Psoas muscle (tissue), 8 donors: ENCODE measurements at regions of chrX and their contacts with region 1.

Region 1: DNA sequence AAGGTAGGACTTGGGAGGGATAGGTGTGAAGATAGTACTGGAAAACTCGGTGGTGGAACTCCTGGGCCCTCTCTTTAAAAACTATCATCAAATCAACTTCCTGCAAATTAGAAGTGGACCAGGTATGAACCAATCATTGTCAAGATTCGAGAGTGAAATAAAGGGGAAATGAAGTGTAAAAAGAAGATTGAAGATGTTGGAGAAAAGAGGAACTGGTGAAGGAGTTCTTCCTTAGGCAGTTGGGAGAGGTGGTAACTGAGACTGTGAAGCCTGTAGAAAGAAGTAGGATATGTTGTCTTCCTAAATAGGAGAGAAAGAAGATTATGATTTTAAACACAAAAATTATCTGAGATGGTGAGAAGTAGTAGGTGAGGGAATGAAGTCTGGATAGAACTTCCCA is 212.2 kb downstream of the PPP1R2C start:
- DNase-seq: no peak
- ATAC-seq: no peak
- H3K4me3 ChIP-seq: no peak overlapping the region
- H3K27ac ChIP-seq: no peak overlapping the region
- H3K4me1 ChIP-seq: no peaks in the 10 kb centered on the region
- H3K27me3 ChIP-seq: peaks cover 0 to 7% (median 0%) of the 10 kb centered on the region in 3 donors
- CTCF ChIP-seq: no peak

Region 2: GRCh38 chrX:42450232-42450631 is 115.5 kb before region 1 on chrX:
- intact Hi-C with region 1: no loop called
- DNase-seq: no peak
- ATAC-seq: no peak
- H3K4me3 ChIP-seq: no peak overlapping the region
- H3K27ac ChIP-seq: no peak overlapping the region
- H3K4me1 ChIP-seq: no peaks in the 10 kb centered on the region
- H3K27me3 ChIP-seq: no peaks in the 10 kb centered on the region
- CTCF ChIP-seq: no peak

Region 3: DNA sequence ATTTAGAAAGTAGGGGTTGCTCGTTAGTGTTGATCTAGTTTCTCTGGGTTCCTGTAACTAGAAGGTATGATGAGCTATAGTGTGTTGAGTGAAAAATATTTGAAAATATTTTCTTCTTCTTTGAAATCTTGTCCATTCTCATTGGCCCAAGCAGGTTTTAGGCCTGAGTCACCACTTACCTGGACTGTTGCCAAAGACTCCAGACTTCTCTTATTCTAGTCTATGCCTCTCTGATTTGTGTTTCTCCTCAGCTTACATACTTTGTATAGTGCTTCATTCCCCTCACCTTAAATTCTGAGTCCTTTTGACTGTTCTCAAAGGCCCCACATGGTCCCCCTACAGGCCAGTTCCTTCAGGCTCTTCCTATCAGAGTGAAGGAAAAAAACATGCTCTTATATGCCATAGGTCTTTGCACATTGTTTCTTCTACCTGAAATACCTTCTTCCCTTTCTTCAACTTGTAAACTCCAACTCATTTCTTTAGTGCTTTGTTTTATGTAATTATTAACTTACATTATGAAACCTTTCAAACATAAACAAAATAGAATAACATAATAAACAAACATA is 46.0 kb before region 1 on chrX:
- intact Hi-C with region 1: no loop called
- DNase-seq: no peak
- ATAC-seq: no peak
- H3K4me3 ChIP-seq: no peak overlapping the region
- H3K27ac ChIP-seq: no peak overlapping the region
- H3K4me1 ChIP-seq: no peaks in the 10 kb centered on the region
- H3K27me3 ChIP-seq: no peaks in the 10 kb centered on the region
- CTCF ChIP-seq: no peak

Region 4: GRCh38 chrX:42546800-42547199 is 18.9 kb before region 1 on chrX:
- intact Hi-C with region 1: loop called in 1 of 2 experiments (anchors 1 kb)
- DNase-seq: no peak
- ATAC-seq: no peak
- H3K4me3 ChIP-seq: no peak overlapping the region
- H3K27ac ChIP-seq: no peak overlapping the region
- H3K4me1 ChIP-seq: no peaks in the 10 kb centered on the region
- H3K27me3 ChIP-seq: peaks cover 0 to 4% (median 0%) of the 10 kb centered on the region in 3 donors
- CTCF ChIP-seq: no peak

Region 5: DNA sequence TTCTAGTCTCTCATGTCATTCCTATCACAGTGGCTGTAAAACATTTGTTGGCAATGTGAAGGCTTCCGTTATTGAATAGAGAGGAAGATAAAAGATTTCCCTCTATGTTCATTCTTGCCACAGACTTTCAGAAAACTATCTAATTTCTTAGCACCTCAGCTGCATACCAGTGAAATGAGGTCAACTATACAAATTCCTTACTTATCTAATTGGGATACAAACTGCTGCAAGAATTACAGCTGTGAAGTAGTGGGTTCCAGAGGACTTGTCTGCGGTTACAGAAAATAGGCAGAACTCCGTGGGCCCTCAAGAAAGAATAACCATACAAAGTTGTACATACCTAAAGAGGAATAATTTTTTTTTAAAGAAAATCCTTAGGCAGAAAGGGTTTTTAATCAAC is 36.4 kb after region 1 on chrX:
- intact Hi-C with region 1: no loop called
- DNase-seq: no peak
- ATAC-seq: no peak
- H3K4me3 ChIP-seq: no peak overlapping the region
- H3K27ac ChIP-seq: no peak overlapping the region
- H3K4me1 ChIP-seq: no peaks in the 10 kb centered on the region
- H3K27me3 ChIP-seq: peaks cover 0 to 11% (median 0%) of the 10 kb centered on the region in 3 donors
- CTCF ChIP-seq: no peak

Region 6: DNA sequence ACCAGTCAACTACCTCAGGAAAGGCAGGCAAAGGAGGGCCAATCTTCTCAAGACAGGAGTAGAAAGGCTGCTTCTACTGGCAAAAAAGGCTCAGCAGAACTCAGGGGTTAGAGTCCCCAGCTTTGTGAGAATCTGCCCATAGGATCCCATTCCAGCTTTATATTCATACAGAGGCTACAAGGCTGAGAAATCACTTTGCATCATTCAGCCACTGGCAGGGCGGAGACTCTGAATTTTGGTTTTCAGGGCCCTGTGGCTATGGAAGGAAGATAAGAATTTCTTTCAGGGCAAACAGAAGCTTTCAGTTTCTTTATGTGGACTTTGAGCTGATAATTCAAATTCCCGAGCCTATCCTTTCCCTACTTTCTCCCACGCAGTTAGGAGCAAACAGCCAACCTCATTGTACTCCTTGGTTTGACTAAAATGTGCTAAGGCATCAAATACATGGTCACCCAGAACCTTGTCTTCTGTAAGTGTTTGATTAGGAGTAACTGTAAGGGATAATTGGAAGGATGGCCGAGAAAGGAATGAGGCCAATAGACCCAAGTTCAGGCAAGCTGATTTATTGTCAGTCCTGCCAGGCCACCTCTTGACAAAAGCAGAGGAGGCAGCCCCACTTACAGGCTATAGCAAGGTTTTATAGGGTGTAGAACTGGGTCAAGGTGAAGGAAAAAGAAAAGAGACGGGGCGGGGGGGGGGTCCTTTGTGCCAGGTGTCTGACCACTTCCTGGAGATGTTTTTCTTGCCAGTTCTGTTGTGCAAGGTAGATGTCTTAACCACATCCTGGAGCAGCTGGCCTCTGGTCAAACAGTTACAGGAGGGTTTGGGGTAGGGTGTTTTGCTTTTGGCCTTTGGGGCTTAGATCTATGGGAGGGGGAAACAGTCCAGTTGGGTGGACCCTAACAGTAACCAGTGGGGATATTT is 377.6 kb after region 1 on chrX:
- intact Hi-C with region 1: no loop called
- DNase-seq: no peak
- ATAC-seq: no peak
- H3K4me3 ChIP-seq: no peak overlapping the region
- H3K27ac ChIP-seq: no peak overlapping the region
- H3K4me1 ChIP-seq: no peaks in the 10 kb centered on the region
- H3K27me3 ChIP-seq: no peaks in the 10 kb centered on the region
- CTCF ChIP-seq: no peak